CD4-positive, alpha-beta T cell (primary cell): ENCODE measurements at regions of chr17 and their contacts with region 1.

Region 1: DNA sequence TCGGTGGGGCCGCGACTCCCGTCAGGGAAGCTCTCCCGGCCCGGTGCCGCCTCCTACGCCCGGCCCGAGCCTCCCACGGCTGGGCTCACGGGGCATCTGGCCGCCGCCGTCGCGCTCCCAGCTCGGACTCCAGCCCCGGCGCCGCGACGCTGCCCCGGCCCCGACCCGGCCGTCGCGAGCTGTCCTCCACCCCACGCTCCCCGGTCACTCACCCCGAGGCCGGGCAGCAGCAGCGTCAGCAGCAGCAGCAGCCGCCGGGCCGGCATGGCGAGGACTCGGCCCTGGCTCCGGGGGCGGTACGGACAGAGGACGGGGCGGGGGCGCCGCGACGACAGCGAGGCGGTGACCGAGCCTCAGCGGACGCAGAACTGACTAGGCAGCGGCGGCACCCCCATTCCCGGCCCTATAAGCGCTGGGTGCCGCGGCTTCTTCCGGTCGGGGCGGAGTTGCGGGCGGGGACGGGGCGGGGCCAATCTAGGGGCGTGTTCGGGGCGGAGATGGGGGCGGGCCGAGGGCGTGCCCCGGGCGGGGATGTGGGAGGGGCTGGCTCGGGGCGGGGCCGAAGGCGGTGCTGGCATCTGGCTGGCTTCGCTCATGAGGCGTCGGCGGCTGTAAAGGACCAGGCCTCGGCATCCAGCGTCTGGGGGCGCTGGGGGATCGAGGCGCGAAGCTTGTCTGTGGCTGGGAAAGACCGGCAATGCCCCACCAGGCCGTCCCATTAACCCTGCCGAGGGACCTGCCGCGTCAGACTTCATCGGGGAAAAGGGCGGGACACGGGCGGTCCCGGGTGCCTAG is at the start of gene ERN1:
- DNase-seq: peak; percentile 85 to 95 (median 91)
- ATAC-seq: peak; percentile 86
- H3K4me3 ChIP-seq: peak within 1 kb of the TSS; percentile 89
- H3K4me3 Mint-ChIP-seq: peak within 1 kb of the TSS; percentile 99
- H3K27ac ChIP-seq: peak within 1 kb of the TSS; percentile 88 to 96
- H3K27ac Mint-ChIP-seq: peak within 1 kb of the TSS; percentile 92
- H3K4me1 ChIP-seq: peaks cover 36% of the 10 kb centered on the region
- H3K4me1 Mint-ChIP-seq: peaks cover 57% of the 10 kb centered on the region
- H3K27me3 ChIP-seq: no peaks in the 10 kb centered on the region
- H3K27me3 Mint-ChIP-seq: no peaks in the 10 kb centered on the region
- CTCF ChIP-seq: no peak
- total RNA-seq, gene ERN1: 62.7 to 67.8 TPM

Region 2: GRCh38 chr17:63911657-63912426 is 218.1 kb before region 1 on chr17:
- CTCF ChIA-PET with region 1: interaction called, 6 read pairs
- POLR2A ChIA-PET with region 1: interaction called, 4 read pairs
- intact Hi-C with region 1: loop called (anchors 2 to 5 kb)
- DNase-seq: peak; percentile 43 to 80 (median 56)
- ATAC-seq: peak; percentile 86
- H3K4me3 ChIP-seq: no peak overlapping the region
- H3K4me3 Mint-ChIP-seq: no peak overlapping the region
- H3K27ac ChIP-seq: no peak overlapping the region
- H3K27ac Mint-ChIP-seq: no peak overlapping the region
- H3K4me1 ChIP-seq: peaks cover 9% of the 10 kb centered on the region
- H3K4me1 Mint-ChIP-seq: no peaks in the 10 kb centered on the region
- H3K27me3 ChIP-seq: no peaks in the 10 kb centered on the region
- H3K27me3 Mint-ChIP-seq: no peaks in the 10 kb centered on the region
- CTCF ChIP-seq: peak; percentile 78

Region 3: GRCh38 chr17:63931099-63931561 is 198.8 kb before region 1 on chr17:
- CTCF ChIA-PET with region 1: no interaction called
- POLR2A ChIA-PET with region 1: interaction called, 10 read pairs
- intact Hi-C with region 1: no loop called
- DNase-seq: peak; percentile 24 to 85 (median 60)
- ATAC-seq: peak; percentile 78
- H3K4me3 ChIP-seq: peak overlapping the region; percentile 69
- H3K4me3 Mint-ChIP-seq: peak overlapping the region; percentile 92
- H3K27ac ChIP-seq: peak overlapping the region; percentile 60 to 63
- H3K27ac Mint-ChIP-seq: peak overlapping the region; percentile 92
- H3K4me1 ChIP-seq: peaks cover 33% of the 10 kb centered on the region
- H3K4me1 Mint-ChIP-seq: peaks cover 26% of the 10 kb centered on the region
- H3K27me3 ChIP-seq: no peaks in the 10 kb centered on the region
- H3K27me3 Mint-ChIP-seq: no peaks in the 10 kb centered on the region
- CTCF ChIP-seq: no peak

Region 4: DNA sequence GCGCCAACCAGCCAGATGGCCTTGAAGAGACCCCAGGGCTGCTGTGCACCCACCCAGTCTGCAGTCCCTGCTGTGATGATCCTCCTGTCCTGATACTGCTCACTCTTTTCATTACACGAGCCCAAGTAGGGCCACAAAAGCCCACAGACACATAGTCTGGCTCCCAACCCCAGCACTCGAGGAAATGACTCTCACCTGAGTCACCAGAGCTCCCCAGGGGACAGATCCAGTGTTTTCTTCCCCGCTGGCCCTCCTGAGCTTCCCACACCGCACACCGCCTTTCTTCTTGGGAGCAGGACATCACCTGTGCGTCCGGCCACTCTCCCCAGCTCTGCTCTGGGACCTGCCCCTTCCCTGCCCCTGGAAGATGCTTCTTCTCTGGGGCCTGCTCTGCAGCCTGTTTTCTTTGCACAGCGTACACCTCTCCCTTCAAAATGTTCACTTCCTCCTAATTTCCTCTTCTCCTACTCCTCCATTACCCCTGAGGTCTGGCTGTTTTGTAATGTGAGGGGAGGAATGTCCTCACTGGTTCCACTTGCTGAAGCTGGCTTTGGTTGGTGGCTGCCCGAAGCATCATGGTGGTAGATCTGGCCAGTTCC is 155.3 kb before region 1 on chr17:
- CTCF ChIA-PET with region 1: no interaction called
- POLR2A ChIA-PET with region 1: no interaction called
- intact Hi-C with region 1: no loop called
- DNase-seq: no peak
- ATAC-seq: no peak
- H3K4me3 ChIP-seq: no peak overlapping the region
- H3K4me3 Mint-ChIP-seq: no peak overlapping the region
- H3K27ac ChIP-seq: no peak overlapping the region
- H3K27ac Mint-ChIP-seq: no peak overlapping the region
- H3K4me1 ChIP-seq: no peaks in the 10 kb centered on the region
- H3K4me1 Mint-ChIP-seq: no peaks in the 10 kb centered on the region
- H3K27me3 ChIP-seq: peaks cover 0 to 3% of the 10 kb centered on the region in 2 experiments
- H3K27me3 Mint-ChIP-seq: no peaks in the 10 kb centered on the region
- CTCF ChIP-seq: no peak

Region 5: DNA sequence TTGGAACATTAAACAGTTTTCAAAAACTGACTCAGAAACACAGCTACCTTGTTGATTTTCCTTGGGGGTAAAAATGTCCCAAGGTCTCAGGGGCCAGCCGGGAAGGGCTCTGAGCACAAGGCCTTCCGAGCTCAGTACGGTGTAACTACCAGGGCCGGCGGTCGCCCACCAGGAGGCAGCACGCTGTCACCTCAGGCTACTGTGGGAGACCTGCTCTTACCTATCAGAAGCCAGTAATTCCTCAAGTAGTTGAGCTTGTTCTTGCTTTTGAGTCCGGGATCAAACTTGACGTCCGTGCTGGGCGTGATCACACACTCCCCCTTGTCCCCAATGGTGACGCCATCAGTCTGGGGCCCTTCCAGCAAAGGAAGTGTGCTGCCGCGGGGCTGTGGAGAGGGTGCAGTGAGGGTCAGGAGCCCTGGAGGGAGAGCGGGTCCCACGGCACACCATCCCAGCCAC is 66.2 kb before region 1 on chr17:
- CTCF ChIA-PET with region 1: interaction called, 26 read pairs
- POLR2A ChIA-PET with region 1: interaction called, 60 read pairs
- intact Hi-C with region 1: loop called (anchors 1 kb)
- DNase-seq: peak; percentile 36 to 81 (median 58)
- ATAC-seq: peak; percentile 53
- H3K4me3 ChIP-seq: peak overlapping the region; percentile 47
- H3K4me3 Mint-ChIP-seq: peak overlapping the region; percentile 82
- H3K27ac ChIP-seq: no peak overlapping the region
- H3K27ac Mint-ChIP-seq: peak overlapping the region; percentile 80
- H3K4me1 ChIP-seq: peaks cover 91% of the 10 kb centered on the region
- H3K4me1 Mint-ChIP-seq: peaks cover 85% of the 10 kb centered on the region
- H3K27me3 ChIP-seq: no peaks in the 10 kb centered on the region
- H3K27me3 Mint-ChIP-seq: no peaks in the 10 kb centered on the region
- CTCF ChIP-seq: peak; percentile 60

Region 6: GRCh38 chr17:64103391-64104364 is 26.3 kb before region 1 on chr17:
- CTCF ChIA-PET with region 1: interaction called, 3 read pairs
- POLR2A ChIA-PET with region 1: interaction called, 21 read pairs
- intact Hi-C with region 1: loop called in 1 of 2 experiments (anchors 2 kb)
- DNase-seq: peak in 1 of 14 experiments; percentile 37
- ATAC-seq: no peak
- H3K4me3 ChIP-seq: no peak overlapping the region
- H3K4me3 Mint-ChIP-seq: peak overlapping the region; percentile 30
- H3K27ac ChIP-seq: no peak overlapping the region
- H3K27ac Mint-ChIP-seq: no peak overlapping the region
- H3K4me1 ChIP-seq: peaks cover 60% of the 10 kb centered on the region
- H3K4me1 Mint-ChIP-seq: peaks cover 72% of the 10 kb centered on the region
- H3K27me3 ChIP-seq: no peaks in the 10 kb centered on the region
- H3K27me3 Mint-ChIP-seq: no peaks in the 10 kb centered on the region
- CTCF ChIP-seq: no peak

Region 7: DNA sequence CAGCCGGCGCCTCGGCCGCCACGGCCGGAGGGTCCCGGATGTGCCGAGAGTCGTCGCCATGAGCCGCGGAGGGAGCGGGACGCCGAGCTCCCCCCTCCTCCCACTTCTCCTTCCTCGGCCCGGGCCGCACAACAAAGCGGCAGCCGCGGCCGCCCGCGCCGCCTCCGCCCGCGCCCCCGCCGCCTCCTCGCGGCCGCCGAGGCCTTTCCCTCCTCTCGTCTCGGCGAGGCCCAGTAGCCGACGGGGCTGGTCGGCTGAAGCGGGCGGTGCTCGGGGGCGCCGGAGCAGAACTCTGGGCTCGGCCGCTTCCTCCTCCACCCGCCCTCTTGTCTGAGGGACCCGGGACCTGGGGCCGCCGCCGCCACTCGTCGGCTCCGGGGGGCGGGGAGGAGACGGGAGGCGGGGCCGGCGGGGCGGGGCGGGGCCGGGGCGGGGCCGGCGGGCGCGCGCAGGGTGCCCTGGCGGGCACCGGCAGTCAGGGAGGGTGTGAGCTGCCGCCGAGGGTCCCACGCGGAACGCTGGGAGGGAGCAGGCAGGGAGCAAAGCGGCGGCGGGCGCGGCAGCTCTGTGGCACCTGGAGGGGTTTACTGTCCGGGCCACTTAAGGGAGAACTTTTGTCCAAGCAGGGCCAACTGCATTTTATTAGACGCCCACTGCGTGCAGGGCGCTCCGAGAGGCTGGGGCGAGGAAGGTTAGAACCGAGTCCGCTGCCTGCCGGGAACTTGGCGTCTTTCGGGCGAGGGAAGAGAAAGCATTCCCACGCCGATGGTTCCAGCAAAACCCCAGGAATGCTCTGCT is 532.2 kb after region 1 on chr17 and contains the start of gene SMURF2:
- CTCF ChIA-PET with region 1: no interaction called
- POLR2A ChIA-PET with region 1: no interaction called
- intact Hi-C with region 1: loop called in 1 of 2 experiments (anchors 10 kb)
- DNase-seq: peak; percentile 59 to 88 (median 76)
- ATAC-seq: peak; percentile 80
- H3K4me3 ChIP-seq: peak within 1 kb of the TSS; percentile 87
- H3K4me3 Mint-ChIP-seq: peak within 1 kb of the TSS; percentile 98
- H3K27ac ChIP-seq: peak within 1 kb of the TSS; percentile 13 to 20
- H3K27ac Mint-ChIP-seq: peak within 1 kb of the TSS; percentile 95
- H3K4me1 ChIP-seq: peaks cover 22% of the 10 kb centered on the region
- H3K4me1 Mint-ChIP-seq: peaks cover 47% of the 10 kb centered on the region
- H3K27me3 ChIP-seq: no peaks in the 10 kb centered on the region
- H3K27me3 Mint-ChIP-seq: no peaks in the 10 kb centered on the region
- CTCF ChIP-seq: no peak
- total RNA-seq, gene SMURF2: 28.0 to 29.7 TPM